ENCODE measurements at regions of chr2 and their contacts with region 1.

Region 1: DNA sequence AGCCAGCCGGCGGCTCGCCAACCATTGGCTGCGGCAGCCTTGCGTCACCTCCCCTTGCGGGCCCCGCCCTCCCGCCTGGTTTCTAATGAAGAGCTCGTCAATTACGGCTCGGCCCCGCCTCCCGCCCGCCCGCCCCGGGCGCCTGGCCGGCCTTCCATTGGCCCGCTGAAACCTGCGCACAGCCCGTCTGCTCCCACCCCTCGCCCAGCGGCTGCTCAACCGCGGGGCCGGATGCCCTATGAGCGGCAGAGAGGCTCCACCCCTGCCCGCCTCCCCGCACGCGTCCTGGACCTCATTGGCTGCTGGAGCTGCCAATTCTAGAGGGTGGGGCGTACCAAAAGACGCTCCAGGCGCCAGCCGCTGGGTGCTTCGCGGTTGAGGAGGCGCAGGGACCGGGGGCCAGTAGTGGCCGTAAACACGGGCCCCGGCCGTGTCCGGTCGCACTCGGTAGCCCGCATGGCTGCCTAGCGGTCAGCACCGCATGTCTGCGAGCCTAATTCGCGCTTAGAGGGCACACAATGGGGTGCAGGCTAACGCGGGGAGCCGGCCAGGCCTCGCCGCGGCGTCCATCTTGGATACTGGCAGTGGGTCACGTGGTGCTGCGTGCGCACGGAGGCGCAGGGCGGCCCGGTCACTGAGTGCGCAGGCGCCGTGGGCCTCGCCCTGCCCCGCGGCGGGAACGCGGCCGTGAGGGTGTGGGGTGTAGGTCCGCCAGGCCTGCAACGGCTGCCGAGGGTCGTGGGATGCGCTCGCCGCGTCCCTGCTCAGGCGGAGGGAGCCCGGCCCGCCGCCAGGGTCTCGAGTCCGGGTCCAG is 454 bp upstream of the HDAC4 start:
- DNase-seq: peak; percentile 98
- H3K4me3 Mint-ChIP-seq: peak overlapping the region; percentile 83
- H3K27ac Mint-ChIP-seq: peak overlapping the region; percentile 100
- H3K4me1 Mint-ChIP-seq: peaks cover 12% of the 10 kb centered on the region
- H3K27me3 Mint-ChIP-seq: no peaks in the 10 kb centered on the region
- CTCF ChIP-seq: no peak

Region 2: DNA sequence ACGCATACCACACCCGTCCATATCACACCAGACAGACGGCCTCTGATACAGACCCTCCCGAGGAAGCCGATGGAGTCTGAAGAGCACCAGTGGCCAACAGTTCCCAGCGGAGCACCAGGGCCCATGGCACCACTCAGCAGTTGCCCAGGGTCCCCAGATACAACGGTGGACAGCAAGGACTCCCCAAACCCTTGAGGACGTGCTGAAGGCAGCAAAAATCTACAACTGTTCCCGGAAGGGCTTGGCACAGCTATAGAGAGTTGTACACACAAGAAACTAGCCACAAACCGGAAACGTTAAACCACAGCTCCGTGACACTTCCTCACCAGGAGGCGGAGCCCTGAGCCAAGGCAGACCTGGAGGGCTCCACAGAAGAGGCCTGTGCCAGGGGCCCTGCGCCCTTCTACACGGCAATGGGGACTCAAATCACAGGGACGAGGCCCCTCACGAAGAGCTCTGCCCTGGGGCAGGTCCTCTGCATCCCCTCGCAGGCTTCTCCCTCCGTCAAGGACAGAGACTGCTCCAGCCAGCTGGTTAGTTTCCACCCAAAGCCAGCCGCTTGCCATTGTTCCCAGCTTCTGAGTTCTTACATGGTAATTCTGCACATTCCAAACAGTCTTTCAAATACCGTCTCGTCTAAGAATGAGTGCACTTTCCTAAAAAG is 133.9 kb before region 1 on chr2:
- CTCF ChIA-PET with region 1: no interaction called
- POLR2A ChIA-PET with region 1: interaction called, 6 read pairs
- intact Hi-C with region 1: loop called (anchors 2 kb)
- DNase-seq: peak; percentile 91
- H3K4me3 Mint-ChIP-seq: peak overlapping the region; percentile 12
- H3K27ac Mint-ChIP-seq: peak overlapping the region; percentile 46
- H3K4me1 Mint-ChIP-seq: peaks cover 40% of the 10 kb centered on the region
- H3K27me3 Mint-ChIP-seq: no peaks in the 10 kb centered on the region
- CTCF ChIP-seq: peak; percentile 35

Region 3: GRCh38 chr2:239275044-239275685 is 126.1 kb before region 1 on chr2:
- CTCF ChIA-PET with region 1: interaction called, 3 read pairs
- POLR2A ChIA-PET with region 1: interaction called, 5 read pairs
- intact Hi-C with region 1: loop called (anchors 2 kb)
- DNase-seq: peak; percentile 98
- H3K4me3 Mint-ChIP-seq: peak overlapping the region; percentile 56
- H3K27ac Mint-ChIP-seq: peak overlapping the region; percentile 87
- H3K4me1 Mint-ChIP-seq: peaks cover 45% of the 10 kb centered on the region
- H3K27me3 Mint-ChIP-seq: no peaks in the 10 kb centered on the region
- CTCF ChIP-seq: no peak

Region 4: GRCh38 chr2:239444626-239445625 is 43.7 kb after region 1 on chr2:
- CTCF ChIA-PET with region 1: no interaction called
- POLR2A ChIA-PET with region 1: interaction called, 5 read pairs
- intact Hi-C with region 1: loop called (anchors 2 kb)
- DNase-seq: peak; percentile 97
- H3K4me3 Mint-ChIP-seq: peak overlapping the region; percentile 60
- H3K27ac Mint-ChIP-seq: peak overlapping the region; percentile 73
- H3K4me1 Mint-ChIP-seq: peaks cover 26% of the 10 kb centered on the region
- H3K27me3 Mint-ChIP-seq: peaks cover 10% of the 10 kb centered on the region
- CTCF ChIP-seq: no peak

Region 5: GRCh38 chr2:239660390-239661230 is 259.3 kb after region 1 on chr2:
- CTCF ChIA-PET with region 1: interaction called, 3 read pairs
- POLR2A ChIA-PET with region 1: interaction called, 22 read pairs
- intact Hi-C with region 1: no loop called
- DNase-seq: peak; percentile 87
- H3K4me3 Mint-ChIP-seq: no peak overlapping the region
- H3K27ac Mint-ChIP-seq: no peak overlapping the region
- H3K4me1 Mint-ChIP-seq: peaks cover 12% of the 10 kb centered on the region
- H3K27me3 Mint-ChIP-seq: peaks cover 81% of the 10 kb centered on the region
- CTCF ChIP-seq: no peak